PC-3 (cell line): ENCODE measurements at regions of chr6 and their contacts with region 1.

Region 1: GRCh38 chr6:43170417-43171283 is at the start of gene SRF:
- DNase-seq: peak; percentile 99
- ATAC-seq: peak; percentile 71
- H3K4me3 ChIP-seq: peak within 1 kb of the TSS; percentile 94
- H3K27ac ChIP-seq: peak within 1 kb of the TSS; percentile 48
- H3K4me1 ChIP-seq: peaks cover 29% of the 10 kb centered on the region
- H3K27me3 ChIP-seq: no peaks in the 10 kb centered on the region
- CTCF ChIP-seq: no peak
- total RNA-seq, gene SRF: 35.0 and 44.3 TPM in 2 replicates

Region 2: DNA sequence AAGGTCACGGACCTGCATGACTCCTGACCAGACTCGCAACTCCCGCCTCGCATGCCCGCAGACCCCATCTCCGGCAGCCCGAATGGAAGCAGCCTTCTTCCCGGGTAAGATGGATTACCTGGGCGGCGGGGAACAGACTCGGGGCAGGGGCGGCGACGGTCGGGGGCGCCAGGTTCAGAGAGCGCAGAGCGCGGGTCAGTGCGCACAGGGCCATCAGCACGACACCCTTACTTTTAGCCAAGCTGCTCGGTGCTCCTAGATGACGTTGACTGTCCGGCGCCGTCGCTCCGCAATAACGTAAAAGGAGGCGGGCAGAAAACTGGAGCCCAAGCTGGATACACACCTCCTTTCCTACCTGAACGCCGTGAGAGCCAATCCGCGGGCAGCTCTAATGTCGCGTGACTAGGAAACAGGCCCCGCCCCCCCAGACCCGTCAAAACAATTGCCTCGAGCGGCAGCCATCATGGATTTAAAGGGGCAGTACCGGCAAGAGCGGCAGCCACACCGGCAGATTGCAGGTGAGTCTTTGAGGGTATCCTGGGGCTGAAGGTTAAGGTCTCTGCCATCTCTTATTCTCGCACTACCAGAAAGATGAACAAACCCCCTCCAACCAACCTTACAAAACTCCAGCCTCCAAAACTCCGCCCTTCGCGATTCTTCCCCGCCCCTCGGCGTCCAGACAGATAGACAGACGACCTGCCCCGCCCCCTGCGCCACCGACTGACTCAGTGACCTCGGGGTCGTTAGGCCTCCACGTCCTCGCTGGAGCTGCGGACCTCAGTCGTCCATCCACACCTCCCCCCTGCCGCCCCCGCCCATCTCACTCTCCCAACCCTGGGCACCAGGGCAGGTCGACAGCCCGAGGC is 111.2 kb before region 1 on chr6 and contains the starts of genes KLC4 and MRPL2:
- CTCF ChIA-PET with region 1: no interaction called
- POLR2A ChIA-PET with region 1: no interaction called
- intact Hi-C with region 1: loop called (anchors 1 kb)
- DNase-seq: peak; percentile 99
- ATAC-seq: peak; percentile 86
- H3K4me3 ChIP-seq: peak within 1 kb of the TSS; percentile 91
- H3K27ac ChIP-seq: peak within 1 kb of the TSS; percentile 46
- H3K4me1 ChIP-seq: peaks cover 23% of the 10 kb centered on the region
- H3K27me3 ChIP-seq: no peaks in the 10 kb centered on the region
- CTCF ChIP-seq: no peak
- total RNA-seq, gene KLC4: 17.5 and 18.5 TPM in 2 replicates
- total RNA-seq, gene MRPL2: 59.8 and 63.9 TPM in 2 replicates

Region 3: DNA sequence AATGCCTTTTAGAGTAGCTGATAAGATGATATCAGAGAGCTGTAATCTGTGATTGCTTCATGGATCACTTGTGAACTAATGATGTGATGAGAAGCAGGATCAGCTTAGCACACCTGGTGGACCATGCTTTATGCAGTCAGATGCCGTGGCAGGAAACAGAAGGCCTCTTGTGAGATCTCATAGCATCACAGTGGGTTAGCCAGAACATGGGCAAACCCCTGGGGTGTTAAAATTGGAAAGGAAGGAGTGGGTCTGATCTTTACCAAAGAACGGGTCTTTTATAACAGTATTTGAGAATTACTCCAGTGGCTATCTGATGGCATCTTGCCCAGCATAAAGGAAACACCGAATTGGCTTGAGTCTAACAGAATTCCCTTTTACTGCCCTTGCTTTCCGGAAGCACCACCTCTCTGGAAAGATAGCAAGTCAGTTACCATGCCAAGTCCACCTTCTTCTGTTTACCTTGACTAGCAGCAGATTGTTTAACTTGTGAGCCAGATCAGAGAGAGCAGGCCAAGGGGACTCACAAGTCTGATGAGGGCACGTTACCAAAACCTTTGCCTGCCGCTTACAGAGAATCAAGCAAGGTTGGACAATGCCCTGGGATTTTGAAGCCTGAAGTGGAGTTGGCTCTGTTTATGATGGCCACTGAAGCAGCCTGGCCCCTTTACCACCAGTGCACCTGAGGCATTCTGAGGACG is 20.4 kb before region 1 on chr6:
- CTCF ChIA-PET with region 1: no interaction called
- POLR2A ChIA-PET with region 1: no interaction called
- intact Hi-C with region 1: loop called (anchors 2 kb)
- DNase-seq: peak; percentile 88
- ATAC-seq: peak; percentile 96
- H3K4me3 ChIP-seq: no peak overlapping the region; the same call in 1 of the 2 replicates
- H3K27ac ChIP-seq: peak overlapping the region; percentile 54
- H3K4me1 ChIP-seq: peaks cover 19% of the 10 kb centered on the region
- H3K27me3 ChIP-seq: no peaks in the 10 kb centered on the region
- CTCF ChIP-seq: no peak